ENCODE measurements at regions of chr6 and their contacts with region 1.

Region 1: DNA sequence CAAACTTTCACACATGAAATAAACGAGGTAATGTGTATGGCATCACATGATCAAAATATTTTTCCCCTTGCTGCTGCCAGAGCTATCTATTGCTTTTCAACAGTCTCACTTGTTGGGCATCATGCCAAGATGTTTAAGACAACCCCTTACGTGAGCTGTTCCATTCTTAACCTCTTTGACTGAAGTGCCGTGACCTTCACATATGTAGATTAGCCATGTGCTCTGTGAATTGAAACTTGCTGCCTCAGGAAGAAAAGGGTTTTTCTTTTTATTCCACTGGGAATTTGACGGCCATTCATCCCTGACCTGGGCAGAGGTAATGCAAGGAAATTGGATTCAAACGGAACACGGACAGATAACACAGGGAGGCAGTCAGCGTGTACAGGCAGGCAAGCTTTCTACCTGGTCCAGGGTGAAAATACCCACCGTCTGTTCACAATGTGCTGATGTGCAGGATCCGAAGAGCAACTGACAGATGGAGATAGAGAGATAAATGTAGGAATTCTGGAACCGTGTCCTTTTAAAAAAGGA is 14.2 kb downstream of the ARID1B start:
- DNase-seq: no peak
- ATAC-seq: peak; percentile 74
- H3K4me3 Mint-ChIP-seq: peak overlapping the region; percentile 77
- H3K27ac Mint-ChIP-seq: peak overlapping the region; percentile 86
- H3K4me1 Mint-ChIP-seq: peaks cover 100% of the 10 kb centered on the region
- H3K27me3 Mint-ChIP-seq: no peaks in the 10 kb centered on the region
- CTCF ChIP-seq: no peak

Region 2: DNA sequence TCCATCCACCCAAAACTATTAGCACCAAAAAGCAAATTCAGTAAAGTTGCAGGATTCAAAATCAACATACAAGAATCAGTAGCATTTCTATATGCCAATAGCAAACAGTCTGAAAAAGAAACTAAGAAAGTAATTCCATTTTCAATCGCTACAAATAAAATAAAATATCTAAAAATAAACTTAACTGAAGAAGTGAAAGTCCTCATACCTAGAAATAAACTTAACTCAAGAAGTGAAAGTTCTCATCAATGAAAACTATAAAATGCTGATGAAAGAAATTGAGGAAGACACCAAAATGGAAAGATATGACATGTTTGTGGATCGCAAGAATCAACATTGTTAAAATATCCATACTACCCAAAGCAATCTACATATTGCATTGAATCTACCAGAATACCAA is 117.2 kb before region 1 on chr6:
- CTCF ChIA-PET with region 1: no interaction called
- POLR2A ChIA-PET with region 1: no interaction called
- intact Hi-C with region 1: no loop called
- DNase-seq: no peak
- ATAC-seq: no peak
- H3K4me3 Mint-ChIP-seq: peak overlapping the region; percentile 8
- H3K27ac Mint-ChIP-seq: peak overlapping the region; percentile 54
- H3K4me1 Mint-ChIP-seq: peaks cover 27% of the 10 kb centered on the region
- H3K27me3 Mint-ChIP-seq: no peaks in the 10 kb centered on the region
- CTCF ChIP-seq: no peak

Region 3: DNA sequence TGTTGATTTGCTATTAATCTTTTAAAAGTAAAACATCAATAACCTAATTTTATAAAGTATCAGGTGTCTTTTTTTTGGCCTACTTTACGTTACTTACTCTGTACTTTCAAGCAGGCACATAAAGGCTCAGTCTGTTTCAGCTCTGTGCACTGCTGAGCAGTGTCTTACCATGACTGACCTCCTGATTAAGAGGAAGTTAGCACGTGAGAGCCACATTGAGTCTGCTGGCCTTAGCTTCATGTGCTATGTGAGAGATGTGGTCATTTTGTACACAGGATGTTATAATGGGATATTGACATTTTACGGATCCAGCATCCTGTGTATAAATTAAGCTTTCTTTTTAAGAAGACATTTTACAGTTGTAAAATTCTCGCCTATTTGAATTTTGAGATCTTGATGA is 17.6 kb after region 1 on chr6:
- CTCF ChIA-PET with region 1: interaction called, 4 read pairs
- POLR2A ChIA-PET with region 1: interaction called, 10 read pairs
- intact Hi-C with region 1: loop called (anchors 2 kb)
- DNase-seq: no peak
- ATAC-seq: peak; percentile 91
- H3K4me3 Mint-ChIP-seq: peak overlapping the region; percentile 44
- H3K27ac Mint-ChIP-seq: peak overlapping the region; percentile 47
- H3K4me1 Mint-ChIP-seq: peaks cover 88% of the 10 kb centered on the region
- H3K27me3 Mint-ChIP-seq: no peaks in the 10 kb centered on the region
- CTCF ChIP-seq: no peak

Region 4: GRCh38 chr6:156848533-156848932 is 57.1 kb after region 1 on chr6:
- CTCF ChIA-PET with region 1: no interaction called
- POLR2A ChIA-PET with region 1: no interaction called
- intact Hi-C with region 1: loop called (anchors 2 kb)
- DNase-seq: no peak
- ATAC-seq: no peak
- H3K4me3 Mint-ChIP-seq: no peak overlapping the region
- H3K27ac Mint-ChIP-seq: peak overlapping the region; percentile 76
- H3K4me1 Mint-ChIP-seq: peaks cover 98% of the 10 kb centered on the region
- H3K27me3 Mint-ChIP-seq: no peaks in the 10 kb centered on the region
- CTCF ChIP-seq: no peak

Region 5: GRCh38 chr6:156859686-156860085 is 68.3 kb after region 1 on chr6:
- CTCF ChIA-PET with region 1: no interaction called
- POLR2A ChIA-PET with region 1: no interaction called
- intact Hi-C with region 1: no loop called
- DNase-seq: no peak
- ATAC-seq: no peak
- H3K4me3 Mint-ChIP-seq: no peak overlapping the region
- H3K27ac Mint-ChIP-seq: no peak overlapping the region
- H3K4me1 Mint-ChIP-seq: peaks cover 89% of the 10 kb centered on the region
- H3K27me3 Mint-ChIP-seq: no peaks in the 10 kb centered on the region
- CTCF ChIP-seq: no peak

Region 6: DNA sequence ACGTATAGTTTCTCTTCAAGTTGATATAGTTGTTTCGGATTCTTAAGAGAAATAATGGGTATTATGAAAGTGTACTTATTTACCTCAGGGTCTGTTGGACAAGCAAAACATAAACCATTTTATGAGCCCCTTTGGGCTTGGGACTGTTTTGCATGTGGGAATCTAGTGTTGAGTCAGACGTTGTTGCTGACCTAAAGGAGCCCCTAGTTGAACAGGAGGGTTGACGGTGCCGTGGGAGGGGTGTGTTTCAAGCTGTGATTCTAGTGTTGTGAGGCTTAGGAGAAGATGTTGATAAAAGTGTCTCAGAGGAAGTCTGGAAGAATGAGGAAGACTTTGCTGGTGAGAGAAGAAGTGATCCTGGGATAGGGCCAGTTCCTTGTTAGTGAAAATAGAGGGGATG is 125.8 kb after region 1 on chr6:
- CTCF ChIA-PET with region 1: no interaction called
- POLR2A ChIA-PET with region 1: no interaction called
- intact Hi-C with region 1: loop called (anchors 5 kb)
- DNase-seq: no peak
- ATAC-seq: no peak
- H3K4me3 Mint-ChIP-seq: peak overlapping the region; percentile 51
- H3K27ac Mint-ChIP-seq: peak overlapping the region; percentile 54
- H3K4me1 Mint-ChIP-seq: peaks cover 70% of the 10 kb centered on the region
- H3K27me3 Mint-ChIP-seq: no peaks in the 10 kb centered on the region
- CTCF ChIP-seq: no peak

Region 7: GRCh38 chr6:157274471-157275226 is 483.3 kb after region 1 on chr6:
- CTCF ChIA-PET with region 1: no interaction called
- POLR2A ChIA-PET with region 1: interaction called, 10 read pairs
- intact Hi-C with region 1: no loop called
- DNase-seq: peak; percentile 93
- ATAC-seq: peak; percentile 79
- H3K4me3 Mint-ChIP-seq: peak overlapping the region; percentile 94
- H3K27ac Mint-ChIP-seq: peak overlapping the region; percentile 96
- H3K4me1 Mint-ChIP-seq: peaks cover 9% of the 10 kb centered on the region
- H3K27me3 Mint-ChIP-seq: no peaks in the 10 kb centered on the region
- CTCF ChIP-seq: no peak

Measured in activated B cell treated with CpG ODN at 0.5 μM for 24 hours (primary cell).